Activated CD4-positive, alpha-beta T cell treated with anti-CD3 and anti-CD28 coated beads for 36 hours (primary cell): ENCODE measurements at regions of chr4 and their contacts with region 1.

Region 1: GRCh38 chr4:81021142-81021944 is 9.2 kb upstream of the BMP3 start:
- DNase-seq: no peak
- ATAC-seq: no peak
- H3K4me3 Mint-ChIP-seq: no peak overlapping the region
- H3K27ac Mint-ChIP-seq: no peak overlapping the region
- H3K4me1 Mint-ChIP-seq: no peaks in the 10 kb centered on the region
- H3K27me3 Mint-ChIP-seq: peaks cover 26% of the 10 kb centered on the region

Region 2: DNA sequence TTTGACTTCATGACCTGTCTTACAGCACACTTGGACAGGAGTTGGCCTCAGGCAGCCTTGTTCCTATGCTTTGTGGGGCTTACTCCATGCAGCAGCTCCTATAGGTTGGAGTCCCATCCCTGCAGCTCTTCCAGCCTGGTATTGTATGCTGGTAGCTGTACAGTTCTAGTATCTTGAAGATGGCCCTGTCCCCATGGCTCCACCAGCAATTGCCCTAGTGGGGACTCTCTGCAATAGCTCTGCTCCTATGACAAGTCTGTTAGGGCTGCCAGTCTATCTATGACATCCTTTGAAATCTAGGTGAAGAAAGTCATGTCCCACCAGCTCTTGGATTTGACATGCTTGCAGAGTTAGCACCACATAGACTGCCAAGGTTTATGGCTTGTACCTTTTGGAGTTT is 1200.9 kb before region 1 on chr4:
- CTCF ChIA-PET with region 1: no interaction called
- POLR2A ChIA-PET with region 1: no interaction called
- intact Hi-C with region 1: no loop called
- DNase-seq: peak; percentile 11
- ATAC-seq: peak; percentile 53
- H3K4me3 Mint-ChIP-seq: no peak overlapping the region
- H3K27ac Mint-ChIP-seq: no peak overlapping the region
- H3K4me1 Mint-ChIP-seq: no peaks in the 10 kb centered on the region
- H3K27me3 Mint-ChIP-seq: no peaks in the 10 kb centered on the region

Region 3: GRCh38 chr4:80072744-80073472 is 948.4 kb before region 1 on chr4 and contains the start of gene ANTXR2:
- CTCF ChIA-PET with region 1: no interaction called
- POLR2A ChIA-PET with region 1: no interaction called
- intact Hi-C with region 1: no loop called
- DNase-seq: peak; percentile 79
- ATAC-seq: peak; percentile 64
- H3K4me3 Mint-ChIP-seq: peak within 1 kb of the TSS; percentile 80
- H3K27ac Mint-ChIP-seq: peak within 1 kb of the TSS; percentile 82
- H3K4me1 Mint-ChIP-seq: peaks cover 87% of the 10 kb centered on the region
- H3K27me3 Mint-ChIP-seq: peaks cover 4% of the 10 kb centered on the region
- total RNA-seq, gene ANTXR2: 2.3 to 3.8 TPM

Region 4: DNA sequence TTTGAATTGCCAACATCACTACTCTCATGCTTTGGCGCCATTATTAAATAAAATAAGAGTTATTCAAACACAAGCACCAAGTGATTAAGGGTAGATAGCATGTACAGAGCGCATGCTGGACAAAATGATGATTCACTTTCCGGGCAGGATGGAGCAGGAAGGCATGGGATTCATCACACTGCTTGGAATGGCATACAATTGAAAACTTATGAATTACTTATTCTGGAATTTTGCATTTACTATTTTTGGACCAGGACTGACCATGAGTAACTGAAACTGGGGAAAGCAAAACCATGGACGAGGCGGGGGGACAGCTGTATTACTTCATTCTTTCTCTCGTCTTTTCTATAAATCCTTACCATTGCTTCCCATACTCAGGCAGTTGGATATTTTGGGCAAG is 783.4 kb before region 1 on chr4:
- CTCF ChIA-PET with region 1: no interaction called
- POLR2A ChIA-PET with region 1: no interaction called
- intact Hi-C with region 1: loop called in 1 of 2 experiments (anchors 10 kb)
- DNase-seq: no peak
- ATAC-seq: no peak
- H3K4me3 Mint-ChIP-seq: no peak overlapping the region
- H3K27ac Mint-ChIP-seq: no peak overlapping the region
- H3K4me1 Mint-ChIP-seq: no peaks in the 10 kb centered on the region
- H3K27me3 Mint-ChIP-seq: peaks cover 4% of the 10 kb centered on the region